Activated CD4-positive, alpha-beta memory T cell treated with anti-CD3 and anti-CD28 coated beads for 36 hours (primary cell): ENCODE measurements at regions of chr10 and their contacts with region 1.

Region 1: DNA sequence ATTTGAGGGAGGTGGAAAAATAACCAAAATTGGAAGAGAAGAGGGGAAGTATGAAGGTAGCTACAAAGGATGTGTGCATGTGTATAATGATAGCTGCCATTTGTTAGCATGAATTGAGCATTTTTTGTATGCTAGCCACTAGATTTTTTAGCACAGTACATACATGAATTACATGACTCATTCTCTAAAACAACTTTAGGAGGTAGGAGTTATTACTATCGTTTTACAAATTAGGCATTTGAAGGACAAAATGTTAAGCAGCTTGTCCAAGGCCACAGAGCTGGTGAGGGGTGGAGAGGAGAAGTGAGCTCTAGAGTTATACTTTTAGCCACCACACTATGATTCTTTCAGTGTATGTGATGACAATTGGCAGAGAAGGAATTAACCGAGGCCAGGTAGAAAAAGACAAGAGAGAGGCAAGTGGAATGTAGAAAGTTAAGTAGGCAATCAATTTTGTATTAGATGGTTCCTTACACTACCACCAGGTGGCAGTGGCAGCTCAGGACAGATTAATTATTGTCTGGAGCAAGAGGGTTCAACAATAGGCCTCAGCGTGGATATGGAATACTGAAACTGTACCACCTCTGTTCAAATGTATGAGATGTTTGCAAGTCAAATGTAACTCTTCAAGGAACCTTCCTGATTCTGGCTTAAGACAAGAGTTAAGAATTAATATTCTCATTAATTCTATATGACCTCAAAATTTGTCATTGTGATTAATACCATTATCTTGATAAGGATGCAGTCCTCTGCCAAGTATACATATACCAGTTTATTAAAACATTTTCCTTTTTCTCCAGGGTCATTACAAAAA is 128.0 kb downstream of the MBL2 start:
- DNase-seq: peak; percentile 8
- H3K4me3 Mint-ChIP-seq: no peak overlapping the region
- H3K27ac Mint-ChIP-seq: no peak overlapping the region
- H3K4me1 Mint-ChIP-seq: no peaks in the 10 kb centered on the region
- H3K27me3 Mint-ChIP-seq: no peaks in the 10 kb centered on the region

Region 2: DNA sequence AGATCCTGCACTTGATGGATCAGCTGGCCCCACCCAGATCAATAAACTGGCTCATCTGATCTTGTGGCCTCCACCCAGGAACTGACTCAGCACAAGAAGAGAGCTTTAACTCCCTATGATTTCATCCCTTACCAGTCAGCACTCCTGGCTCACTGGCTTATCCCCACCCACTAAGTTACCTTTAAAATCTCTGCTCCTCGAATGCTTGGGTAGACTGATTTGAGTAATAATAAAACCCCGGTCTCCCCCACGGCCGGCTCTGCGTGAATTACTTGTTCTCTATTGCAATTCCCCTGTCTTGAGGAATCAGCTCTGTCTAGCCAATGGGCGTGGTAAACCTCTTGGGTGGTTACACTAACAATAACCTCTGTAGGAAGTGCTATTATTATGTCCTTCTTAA is 44.3 kb after region 1 on chr10:
- CTCF ChIA-PET with region 1: no interaction called
- POLR2A ChIA-PET with region 1: no interaction called
- intact Hi-C with region 1: no loop called
- DNase-seq: no peak
- H3K4me3 Mint-ChIP-seq: no peak overlapping the region
- H3K27ac Mint-ChIP-seq: no peak overlapping the region
- H3K4me1 Mint-ChIP-seq: no peaks in the 10 kb centered on the region
- H3K27me3 Mint-ChIP-seq: no peaks in the 10 kb centered on the region

Region 3: GRCh38 chr10:52729271-52730104 is 84.9 kb after region 1 on chr10:
- CTCF ChIA-PET with region 1: no interaction called
- POLR2A ChIA-PET with region 1: no interaction called
- intact Hi-C with region 1: loop called (anchors 1 kb)
- DNase-seq: no peak
- H3K4me3 Mint-ChIP-seq: no peak overlapping the region
- H3K27ac Mint-ChIP-seq: no peak overlapping the region
- H3K4me1 Mint-ChIP-seq: no peaks in the 10 kb centered on the region
- H3K27me3 Mint-ChIP-seq: no peaks in the 10 kb centered on the region